ENCODE measurements at regions of chr17 and their contacts with region 1.

Region 1: DNA sequence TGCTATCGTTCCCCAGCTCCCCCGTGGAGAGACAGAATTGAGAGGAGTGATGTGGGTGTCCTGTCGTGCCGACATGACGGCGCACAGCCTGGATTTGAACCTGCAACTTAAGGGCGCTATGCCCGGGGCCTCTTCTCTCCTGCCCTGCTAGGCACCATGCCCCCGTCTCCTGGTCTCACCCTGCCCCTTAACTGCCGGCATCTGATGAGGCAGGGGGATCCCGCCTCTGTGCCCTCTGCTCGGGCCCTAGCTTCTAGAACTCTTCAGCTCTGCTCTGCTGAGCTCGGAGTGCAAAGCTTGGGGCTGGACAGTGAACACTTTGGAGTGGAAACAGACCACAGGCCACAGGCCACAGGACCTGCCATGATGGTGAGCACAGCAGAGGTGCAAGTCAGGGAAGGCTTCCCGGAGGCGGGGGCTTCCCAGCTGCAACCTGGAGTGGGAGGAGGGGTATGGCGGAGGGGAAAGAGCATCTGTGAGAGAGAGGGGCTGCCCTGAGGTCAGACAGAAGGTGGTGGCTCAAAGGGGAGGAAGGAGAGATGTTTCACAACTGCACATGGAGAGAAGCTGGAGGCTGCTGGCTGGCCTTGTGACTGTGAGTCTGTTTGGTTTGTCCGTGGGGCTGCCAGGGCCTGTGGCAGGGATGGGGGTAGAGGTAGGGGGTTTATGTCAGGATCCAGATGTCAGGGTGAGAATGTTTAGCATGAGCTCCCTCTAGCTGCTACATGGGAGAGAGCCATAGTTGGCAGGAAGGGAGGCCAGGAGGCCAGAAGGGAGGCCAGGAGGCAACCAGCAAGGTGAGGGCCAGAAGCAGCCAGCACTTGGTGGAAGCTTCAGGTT is 107.8 kb downstream of the CRLF3 start:
- DNase-seq: peak in 2 of 7 donors; percentile 14 to 40
- H3K4me3 ChIP-seq: no peak overlapping the region
- H3K27ac ChIP-seq: no peak overlapping the region
- H3K4me1 ChIP-seq: no peaks in the 10 kb centered on the region
- H3K27me3 ChIP-seq: no peaks in the 10 kb centered on the region
- CTCF ChIP-seq: no peak
- POLR2A ChIP-seq: no peak

Region 2: DNA sequence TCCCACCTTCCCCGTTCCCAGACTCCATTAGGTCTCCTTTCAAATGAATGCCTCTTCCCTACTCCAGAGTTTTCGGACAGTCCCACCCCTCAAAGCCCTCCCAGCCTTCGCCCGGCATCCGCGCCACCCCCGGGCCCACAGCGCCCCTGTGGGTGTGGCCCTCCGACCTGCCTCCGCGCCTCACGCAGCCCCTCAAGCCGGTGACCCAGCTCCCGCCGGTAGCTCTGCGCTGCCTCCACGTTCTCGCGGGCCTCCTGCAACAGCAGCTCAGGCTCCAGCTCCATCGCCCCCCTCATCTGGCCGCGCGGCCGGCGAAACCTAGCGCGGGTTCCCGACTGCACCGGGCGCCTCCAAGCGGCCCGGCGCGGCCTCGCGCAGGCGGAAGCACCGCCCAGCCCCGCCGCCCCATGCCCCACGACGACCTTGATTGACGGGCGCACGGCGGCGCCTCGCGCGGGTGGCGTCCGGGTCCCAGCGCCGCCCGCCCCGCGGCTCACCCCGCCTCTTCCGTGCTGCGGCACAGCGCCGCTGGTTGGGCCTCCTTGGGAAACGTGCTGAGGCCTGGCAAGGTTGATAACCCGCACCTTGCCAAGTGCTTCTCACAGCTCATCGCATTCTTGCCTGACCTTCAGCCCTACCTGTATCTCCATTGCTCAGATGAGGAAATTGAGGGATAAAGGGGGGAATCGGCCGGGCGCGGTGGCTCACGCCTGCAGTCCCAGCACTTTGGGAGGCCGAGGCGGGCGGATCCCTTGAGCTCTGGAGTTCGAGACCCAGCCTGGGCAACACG is 107.9 kb after region 1 on chr17 and contains the start of gene CRLF3:
- intact Hi-C with region 1: loop called (anchors 10 kb)
- DNase-seq: peak; percentile 86 to 91 (median 88)
- H3K4me3 ChIP-seq: peak within 1 kb of the TSS; percentile 62 to 96 (median 80)
- H3K27ac ChIP-seq: peak within 1 kb of the TSS in 4 of 5 donors; percentile 49 to 85 (median 78)
- H3K4me1 ChIP-seq: peaks cover 9 to 31% of the 10 kb centered on the region in 2 donors
- H3K27me3 ChIP-seq: no peaks in the 10 kb centered on the region
- CTCF ChIP-seq: peak in 5 of 6 experiments; percentile 32 to 63 (median 60)
- POLR2A ChIP-seq: peak; percentile 58 to 73
- total RNA-seq, gene CRLF3: 3.1 to 18.0 (median 7.8) TPM